ENCODE measurements at regions of chr16 and their contacts with region 1.

Region 1: DNA sequence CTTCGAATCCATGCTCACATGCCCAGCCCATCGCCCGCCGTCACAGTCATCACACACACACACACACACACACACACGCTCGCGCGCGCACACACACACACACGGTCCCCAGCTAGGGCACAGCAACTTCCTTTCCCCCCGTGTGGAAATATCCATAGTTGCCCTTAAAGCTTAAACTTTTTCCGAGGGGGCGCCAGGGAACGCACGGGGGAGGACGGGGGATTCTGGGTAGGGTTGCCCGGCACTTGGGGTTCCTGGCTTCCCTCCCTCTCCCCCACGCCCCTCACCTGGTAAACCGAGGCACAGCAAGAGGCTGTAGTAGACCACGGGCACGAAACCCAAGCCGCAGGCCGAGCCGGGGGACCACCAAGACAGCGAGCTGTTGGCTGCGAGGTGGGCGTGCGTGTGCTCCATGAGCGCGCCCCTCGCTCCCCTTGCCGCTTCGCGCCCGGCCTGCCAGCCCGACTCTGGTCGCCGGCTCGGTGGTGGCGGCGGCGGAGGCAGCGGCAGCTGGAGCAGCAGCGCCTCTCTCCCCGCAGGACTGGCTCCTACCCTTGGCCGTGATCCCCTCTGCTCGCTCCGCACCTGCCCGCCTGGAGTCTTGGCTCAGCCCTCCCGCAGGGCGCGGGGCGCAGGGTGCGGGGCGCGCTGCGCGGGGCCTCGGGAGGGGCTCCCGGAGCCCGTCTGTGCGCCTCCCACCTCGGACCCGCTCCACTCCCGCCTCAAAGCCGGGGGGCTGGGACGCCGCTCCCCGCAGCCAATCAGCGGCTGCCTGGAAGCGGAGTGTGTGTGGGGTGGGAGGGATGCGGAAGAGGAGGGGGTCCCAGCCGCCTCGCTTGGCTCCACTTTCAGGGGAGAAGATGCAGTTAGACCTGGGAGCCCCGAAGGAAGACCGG is at the start of gene GPR139:
- DNase-seq: no peak
- H3K4me3 ChIP-seq: no peak within 1 kb of the TSS
- CTCF ChIP-seq: no peak

Region 2: DNA sequence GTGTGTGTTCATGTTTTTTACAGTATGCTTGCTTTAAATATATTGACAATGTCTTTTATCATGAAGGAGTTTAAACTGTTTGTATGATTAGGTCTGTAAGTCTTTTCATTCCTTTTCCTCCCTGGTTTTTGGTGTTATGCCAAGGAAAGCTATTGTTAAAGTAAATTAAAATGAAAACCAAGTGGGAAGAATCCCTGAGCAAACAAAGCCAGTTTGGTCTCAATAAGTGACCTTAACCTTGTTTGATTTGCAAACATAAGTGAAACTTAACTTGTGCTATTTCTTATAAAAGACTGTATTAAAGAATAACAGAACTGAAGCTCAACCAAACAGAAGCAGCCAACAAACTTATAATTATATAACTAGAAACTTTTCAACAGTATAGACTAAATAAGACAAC is 59.4 kb before region 1 on chr16:
- in situ Hi-C with region 1: loop called (anchors 10 kb)
- DNase-seq: no peak
- H3K4me3 ChIP-seq: no peak overlapping the region
- CTCF ChIP-seq: no peak